HEK293T (cell line): ENCODE measurements at regions of chr14 and their contacts with region 1.

Region 1: DNA sequence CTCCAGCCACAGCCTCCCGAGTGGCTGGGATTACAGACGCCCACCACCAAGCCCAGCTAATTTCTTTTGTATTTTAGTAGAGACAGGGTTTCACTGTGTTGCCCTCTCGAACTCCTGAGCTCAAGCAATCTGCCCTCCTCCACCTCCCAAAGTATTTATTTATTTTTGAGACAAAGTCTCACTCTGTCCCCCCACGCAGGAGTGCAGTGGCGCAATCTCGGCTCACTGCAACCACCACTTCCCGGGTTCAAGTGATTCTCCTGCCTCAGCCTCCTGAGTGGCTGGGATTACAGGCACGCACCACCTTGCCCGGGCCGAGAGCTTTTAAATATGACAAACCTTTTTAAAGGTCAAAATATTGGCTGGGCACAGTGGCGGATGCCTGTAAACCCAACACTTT is 14.6 kb downstream of the NUMB start:
- DNase-seq: no peak

Region 2: GRCh38 chr14:73272393-73272792 is 171.4 kb before region 1 on chr14:
- CTCF ChIA-PET with region 1: no interaction called
- POLR2A ChIA-PET with region 1: no interaction called
- DNase-seq: no peak

Region 3: GRCh38 chr14:73458151-73458976 is 14.6 kb after region 1 on chr14 and contains the start of gene NUMB:
- CTCF ChIA-PET with region 1: no interaction called
- POLR2A ChIA-PET with region 1: interaction called, 11 read pairs
- DNase-seq: peak; percentile 93